CD14-positive monocyte (primary cell): ENCODE measurements at regions of chr7 and their contacts with region 1.

Region 1: DNA sequence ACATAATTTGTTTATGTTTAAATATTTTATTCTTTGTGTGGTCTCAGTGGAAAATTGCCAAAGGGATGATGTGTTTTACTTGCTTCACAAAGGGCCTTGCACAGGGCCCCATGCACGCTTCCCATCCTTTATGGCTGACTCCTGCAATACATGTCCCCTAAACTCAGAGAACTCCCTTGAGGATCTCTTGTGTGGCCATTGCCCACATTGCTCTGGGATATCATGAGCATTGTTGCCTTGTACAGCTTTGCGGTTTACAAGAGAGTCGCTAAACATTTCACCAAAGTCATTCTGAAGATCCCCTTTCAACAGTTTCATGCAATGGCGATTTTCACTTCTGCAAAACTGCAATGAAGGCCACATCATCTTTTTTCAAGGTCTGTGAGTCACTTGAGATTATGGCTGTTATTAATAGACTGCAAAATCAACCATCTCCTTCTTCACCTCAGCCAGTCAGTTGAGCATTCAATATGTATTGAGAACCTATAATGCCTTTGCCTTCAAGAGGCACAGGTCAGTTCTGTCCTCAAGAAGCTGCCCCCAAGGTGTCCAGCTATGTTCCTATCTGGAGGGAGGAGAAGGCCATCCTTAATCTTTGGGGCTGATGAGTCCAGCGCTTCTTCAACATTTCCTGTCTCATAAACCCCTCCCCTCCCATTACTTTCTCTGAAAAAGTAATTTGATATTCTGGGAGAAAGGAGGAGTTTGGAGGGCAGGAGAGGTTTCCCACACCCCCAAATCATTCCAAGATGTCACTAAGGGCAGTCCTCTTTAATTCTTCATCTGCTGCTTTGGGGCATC is 108.1 kb downstream of the CCDC71L start:
- DNase-seq: peak; percentile 85 to 94 (median 94)
- H3K4me3 ChIP-seq: peak overlapping the region in 1 of 3 experiments; percentile 49
- H3K4me3 Mint-ChIP-seq: no peak overlapping the region
- H3K27ac ChIP-seq: peak overlapping the region; percentile 32 to 87
- H3K27ac Mint-ChIP-seq: peak overlapping the region; percentile 86 to 95 (median 93)
- H3K4me1 ChIP-seq: peaks cover 26 to 30% of the 10 kb centered on the region in 2 donors
- H3K4me1 Mint-ChIP-seq: peaks cover 32% of the 10 kb centered on the region
- H3K27me3 ChIP-seq: no peaks in the 10 kb centered on the region
- H3K27me3 Mint-ChIP-seq: peaks cover 0 to 12% (median 9%) of the 10 kb centered on the region in 3 donors
- CTCF ChIP-seq: no peak

Region 2: DNA sequence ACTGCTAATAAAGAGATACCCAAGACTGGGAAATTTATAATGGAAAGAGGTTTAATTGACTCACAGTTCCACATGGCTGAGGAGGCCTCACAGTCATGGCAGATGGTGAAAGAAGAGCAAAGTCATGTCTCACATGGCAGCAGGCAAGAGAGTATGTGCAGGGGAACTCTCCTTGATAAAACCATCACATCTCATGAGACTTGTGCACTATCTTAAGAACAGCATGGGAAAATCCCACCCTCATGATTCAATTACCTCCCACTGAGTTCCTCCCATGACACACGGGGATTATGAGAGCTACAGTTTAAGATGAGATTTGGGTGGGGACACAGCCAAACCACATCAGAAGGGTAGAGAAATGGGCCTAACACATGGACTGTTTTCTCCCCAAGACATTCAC is 48.2 kb before region 1 on chr7:
- intact Hi-C with region 1: no loop called
- DNase-seq: peak in 1 of 3 donors; percentile 24
- H3K4me3 ChIP-seq: no peak overlapping the region
- H3K4me3 Mint-ChIP-seq: no peak overlapping the region
- H3K27ac ChIP-seq: no peak overlapping the region
- H3K27ac Mint-ChIP-seq: no peak overlapping the region
- H3K4me1 ChIP-seq: peaks cover 4% of the 10 kb centered on the region in 2 donors
- H3K4me1 Mint-ChIP-seq: peaks cover 11% of the 10 kb centered on the region
- H3K27me3 ChIP-seq: no peaks in the 10 kb centered on the region
- H3K27me3 Mint-ChIP-seq: peaks cover 0 to 2% (median 0%) of the 10 kb centered on the region in 3 donors
- CTCF ChIP-seq: no peak

Region 3: DNA sequence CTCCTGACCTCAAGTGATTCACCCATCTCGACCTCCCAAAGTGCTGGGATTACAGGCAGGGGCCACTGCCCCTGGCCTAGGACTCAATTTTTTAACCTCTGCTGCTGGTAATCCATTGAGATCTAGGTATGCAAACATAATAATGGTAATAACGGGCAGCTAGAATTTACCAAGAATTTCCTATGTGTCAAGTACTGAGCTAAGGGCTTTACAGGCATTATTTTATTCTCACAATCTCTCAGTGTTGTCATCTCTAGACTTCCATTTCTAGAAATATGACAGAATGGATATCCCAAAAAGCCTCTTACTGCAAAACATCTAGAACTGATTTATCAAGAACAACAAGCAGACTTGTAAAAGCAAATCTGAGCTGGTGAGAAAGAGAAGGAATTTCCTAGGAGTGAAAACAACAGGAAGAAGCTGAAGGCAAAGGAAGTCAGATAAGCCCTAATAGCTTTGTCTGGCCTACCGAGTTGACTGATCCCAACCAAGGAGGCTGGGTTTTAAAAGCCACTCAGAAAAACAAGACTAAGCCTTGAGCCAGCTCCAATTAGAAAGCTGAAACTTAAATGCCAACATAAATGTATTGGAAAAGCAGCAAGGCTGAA is 37.5 kb after region 1 on chr7:
- intact Hi-C with region 1: loop called in 1 of 2 experiments (anchors 5 kb)
- DNase-seq: no peak
- H3K4me3 ChIP-seq: no peak overlapping the region
- H3K4me3 Mint-ChIP-seq: no peak overlapping the region
- H3K27ac ChIP-seq: no peak overlapping the region
- H3K27ac Mint-ChIP-seq: no peak overlapping the region
- H3K4me1 ChIP-seq: no peaks in the 10 kb centered on the region
- H3K4me1 Mint-ChIP-seq: no peaks in the 10 kb centered on the region
- H3K27me3 ChIP-seq: no peaks in the 10 kb centered on the region
- H3K27me3 Mint-ChIP-seq: peaks cover 0 to 5% (median 0%) of the 10 kb centered on the region in 3 donors
- CTCF ChIP-seq: no peak

Region 4: GRCh38 chr7:106600569-106601373 is 47.9 kb after region 1 on chr7:
- intact Hi-C with region 1: no loop called
- DNase-seq: no peak
- H3K4me3 ChIP-seq: no peak overlapping the region
- H3K4me3 Mint-ChIP-seq: no peak overlapping the region
- H3K27ac ChIP-seq: no peak overlapping the region
- H3K27ac Mint-ChIP-seq: no peak overlapping the region
- H3K4me1 ChIP-seq: peaks cover 6 to 8% of the 10 kb centered on the region in 2 donors
- H3K4me1 Mint-ChIP-seq: peaks cover 4% of the 10 kb centered on the region
- H3K27me3 ChIP-seq: no peaks in the 10 kb centered on the region
- H3K27me3 Mint-ChIP-seq: peaks cover 0 to 2% (median 0%) of the 10 kb centered on the region in 3 donors
- CTCF ChIP-seq: no peak

Region 5: DNA sequence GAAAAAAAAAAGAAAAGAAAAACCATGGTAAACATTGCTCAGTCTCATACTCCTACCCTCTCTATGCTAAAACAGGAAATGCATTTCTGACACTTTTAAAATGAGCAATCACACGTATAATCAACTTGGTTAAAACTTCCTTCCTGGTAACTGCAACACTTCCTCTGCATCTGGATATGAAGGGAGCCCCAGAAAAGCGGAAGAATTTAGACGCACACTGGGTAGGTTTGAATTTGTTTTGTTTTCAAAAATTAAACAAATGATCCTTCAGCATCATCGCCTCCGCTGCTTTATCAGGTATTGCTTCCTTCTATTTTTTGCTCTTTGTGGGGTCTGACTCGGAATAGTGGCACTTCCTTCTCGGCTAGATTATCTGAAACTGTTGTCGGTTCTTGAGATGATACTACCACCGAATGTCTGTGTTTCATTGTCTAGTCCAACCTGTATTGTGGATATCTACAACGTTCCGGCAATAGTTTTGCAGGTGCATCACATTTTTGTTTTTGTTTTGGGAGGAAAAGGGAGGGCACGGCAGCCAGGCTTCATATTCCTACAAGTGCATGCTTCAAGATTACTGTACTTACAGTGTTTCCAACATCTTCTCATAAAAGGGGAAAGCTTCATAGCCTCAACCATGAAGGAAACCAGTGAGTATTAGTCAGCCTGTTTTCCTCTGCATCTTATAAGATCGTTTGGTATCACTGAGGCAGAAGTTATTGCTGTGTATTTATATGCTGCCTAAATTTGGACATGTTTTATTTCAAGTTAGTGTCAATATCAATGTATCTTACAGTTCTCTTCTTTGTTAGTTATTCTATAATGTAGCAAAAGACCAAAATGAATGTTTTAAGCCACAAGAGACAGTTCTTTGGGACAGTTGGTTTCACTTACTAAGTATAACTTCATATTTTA is 312.5 kb after region 1 on chr7 and contains the start of gene PIK3CG:
- intact Hi-C with region 1: loop called in 1 of 2 experiments (anchors 10 kb)
- DNase-seq: peak; percentile 78 to 87 (median 83)
- H3K4me3 ChIP-seq: peak within 1 kb of the TSS; percentile 60 to 100 (median 92)
- H3K4me3 Mint-ChIP-seq: peak within 1 kb of the TSS; percentile 85 to 96
- H3K27ac ChIP-seq: peak within 1 kb of the TSS; percentile 42 to 91
- H3K27ac Mint-ChIP-seq: peak within 1 kb of the TSS; percentile 91 to 97 (median 94)
- H3K4me1 ChIP-seq: peaks cover 59 to 81% of the 10 kb centered on the region in 2 donors
- H3K4me1 Mint-ChIP-seq: peaks cover 75% of the 10 kb centered on the region
- H3K27me3 ChIP-seq: no peaks in the 10 kb centered on the region
- H3K27me3 Mint-ChIP-seq: no peaks in the 10 kb centered on the region
- CTCF ChIP-seq: no peak
- polyA plus RNA-seq, gene PIK3CG: 17.9 to 31.2 (median 20.7) TPM